ENCODE measurements at regions of chr11 and their contacts with region 1.

Region 1: GRCh38 chr11:10920205-10920604 is 62.4 kb upstream of the ZBED5 start:
- DNase-seq: no peak

Region 2: DNA sequence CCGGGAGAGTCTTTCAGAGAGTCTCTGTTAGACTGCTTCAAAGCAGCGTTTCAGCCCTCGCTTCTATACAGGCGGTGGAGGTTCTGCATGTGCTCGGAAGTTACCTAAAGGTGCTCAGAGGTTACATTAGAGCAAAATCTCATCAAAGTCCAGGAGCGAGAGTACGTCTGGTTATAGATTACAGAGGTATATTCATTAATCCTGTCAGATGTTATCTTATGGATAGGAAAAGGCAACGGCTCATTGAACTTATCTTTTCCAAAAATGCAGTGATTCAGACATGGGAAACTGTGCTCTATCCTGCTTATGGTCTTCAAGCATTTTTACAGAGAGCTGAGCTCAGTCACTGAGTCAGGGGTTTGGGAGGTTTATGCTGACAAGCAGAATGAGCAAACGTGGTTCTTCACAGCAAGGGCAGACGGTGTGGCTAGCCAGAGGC is 53.3 kb before region 1 on chr11:
- intact Hi-C with region 1: loop called (anchors 10 kb)
- DNase-seq: no peak

Region 3: DNA sequence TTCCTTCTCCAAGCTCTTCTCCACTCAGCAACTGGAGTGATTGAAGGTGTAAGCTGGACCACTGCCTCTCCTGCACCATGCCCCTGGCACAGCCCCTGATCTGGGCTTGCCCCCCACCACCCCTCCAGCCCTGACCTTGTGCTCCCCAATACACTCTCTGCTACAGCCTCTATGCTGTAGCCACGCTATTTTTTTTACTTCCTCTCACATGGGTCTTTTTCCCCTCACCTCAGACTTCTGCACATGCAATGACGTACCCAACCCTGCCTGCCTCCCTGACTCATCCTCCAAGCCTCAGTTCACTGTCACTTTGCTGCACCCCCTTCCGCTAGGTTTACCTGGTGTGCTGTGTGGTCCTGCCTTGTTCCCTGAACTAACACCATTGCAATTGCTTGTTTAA is 423.8 kb after region 1 on chr11:
- intact Hi-C with region 1: no loop called
- DNase-seq: no peak